CD4-positive, alpha-beta memory T cell (primary cell): ENCODE measurements at regions of chr22 and their contacts with region 1.

Region 1: GRCh38 chr22:37623075-37624016 is 14.7 kb downstream of the GGA1 start:
- DNase-seq: peak; percentile 72 to 79 (median 75)
- H3K4me3 ChIP-seq: no peak overlapping the region
- H3K4me3 Mint-ChIP-seq: peak overlapping the region in 7 of 8 donors; percentile 9 to 85 (median 60)
- H3K27ac ChIP-seq: peak overlapping the region; percentile 52
- H3K27ac Mint-ChIP-seq: peak overlapping the region; percentile 92 to 97 (median 94)
- H3K4me1 ChIP-seq: peaks cover 52% of the 10 kb centered on the region
- H3K4me1 Mint-ChIP-seq: peaks cover 19 to 53% (median 37%) of the 10 kb centered on the region in 4 donors
- H3K27me3 ChIP-seq: no peaks in the 10 kb centered on the region
- H3K27me3 Mint-ChIP-seq: no peaks in the 10 kb centered on the region

Region 2: GRCh38 chr22:37658133-37659065 is 35.1 kb after region 1 on chr22 and contains the start of gene PDXP:
- CTCF ChIA-PET with region 1: interaction called, 10 read pairs
- POLR2A ChIA-PET with region 1: interaction called, 36 read pairs
- intact Hi-C with region 1: no loop called
- DNase-seq: peak; percentile 98
- H3K4me3 ChIP-seq: peak within 1 kb of the TSS; percentile 27 to 57
- H3K4me3 Mint-ChIP-seq: peak within 1 kb of the TSS; percentile 82 to 94 (median 86)
- H3K27ac ChIP-seq: peak within 1 kb of the TSS; percentile 63
- H3K27ac Mint-ChIP-seq: peak within 1 kb of the TSS; percentile 85 to 98 (median 93)
- H3K4me1 ChIP-seq: peaks cover 33% of the 10 kb centered on the region
- H3K4me1 Mint-ChIP-seq: peaks cover 29 to 49% (median 37%) of the 10 kb centered on the region in 4 donors
- H3K27me3 ChIP-seq: no peaks in the 10 kb centered on the region
- H3K27me3 Mint-ChIP-seq: no peaks in the 10 kb centered on the region
- total RNA-seq, gene PDXP: 7.3 to 9.8 TPM

Region 3: DNA sequence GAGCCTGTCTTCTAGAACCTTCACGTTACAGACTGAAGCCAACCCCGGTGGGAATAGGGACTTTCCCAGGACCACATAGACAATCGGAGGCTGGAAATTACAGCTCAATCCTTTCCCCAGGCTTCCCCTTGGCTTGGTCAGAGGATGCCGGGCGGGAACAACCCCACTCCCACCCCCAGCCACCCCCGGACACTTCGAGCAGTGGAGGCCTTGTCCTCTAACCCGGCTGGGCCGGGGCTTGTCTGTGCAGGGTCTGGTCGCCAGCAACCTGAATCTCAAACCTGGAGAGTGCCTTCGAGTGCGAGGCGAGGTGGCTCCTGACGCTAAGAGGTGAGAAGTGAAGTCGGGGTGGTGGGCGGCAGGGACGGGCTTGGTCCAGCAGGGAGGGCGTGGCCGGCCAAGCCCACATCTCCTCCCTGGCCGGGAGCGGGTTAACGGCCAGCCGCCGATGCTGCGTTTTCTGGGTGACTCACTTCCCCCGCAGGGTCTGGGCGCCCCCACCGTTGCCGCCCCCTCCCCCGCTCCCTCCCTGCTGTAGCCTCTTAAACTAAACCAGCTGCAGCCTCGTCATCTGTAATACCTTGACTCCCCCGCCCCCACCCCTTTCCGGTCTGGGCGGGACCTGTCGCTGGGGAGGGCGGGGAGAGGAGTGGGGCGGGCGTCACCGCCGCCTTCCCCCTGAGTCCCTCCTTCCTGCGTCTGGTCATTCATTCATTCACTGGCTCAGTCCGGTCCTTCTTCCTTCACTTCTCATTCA is 53.6 kb after region 1 on chr22:
- CTCF ChIA-PET with region 1: interaction called, 78 read pairs
- POLR2A ChIA-PET with region 1: interaction called, 57 read pairs
- intact Hi-C with region 1: loop called (anchors 1 kb)
- DNase-seq: peak; percentile 92 to 97 (median 93)
- H3K4me3 ChIP-seq: peak overlapping the region; percentile 62 to 95
- H3K4me3 Mint-ChIP-seq: peak overlapping the region; percentile 88 to 99 (median 94)
- H3K27ac ChIP-seq: peak overlapping the region; percentile 87
- H3K27ac Mint-ChIP-seq: peak overlapping the region; percentile 96 to 100 (median 100)
- H3K4me1 ChIP-seq: peaks cover 48% of the 10 kb centered on the region
- H3K4me1 Mint-ChIP-seq: peaks cover 29 to 80% (median 46%) of the 10 kb centered on the region in 4 donors
- H3K27me3 ChIP-seq: no peaks in the 10 kb centered on the region
- H3K27me3 Mint-ChIP-seq: no peaks in the 10 kb centered on the region

Region 4: GRCh38 chr22:37686002-37686982 is 62.9 kb after region 1 on chr22 and contains the start of gene NOL12:
- CTCF ChIA-PET with region 1: interaction called, 78 read pairs
- POLR2A ChIA-PET with region 1: interaction called, 39 read pairs
- intact Hi-C with region 1: loop called (anchors 1 kb)
- DNase-seq: peak; percentile 76 to 82 (median 77)
- H3K4me3 ChIP-seq: peak within 1 kb of the TSS; percentile 79 to 96
- H3K4me3 Mint-ChIP-seq: peak within 1 kb of the TSS; percentile 91 to 98 (median 96)
- H3K27ac ChIP-seq: peak within 1 kb of the TSS; percentile 92
- H3K27ac Mint-ChIP-seq: peak within 1 kb of the TSS; percentile 91 to 98 (median 95)
- H3K4me1 ChIP-seq: peaks cover 25% of the 10 kb centered on the region
- H3K4me1 Mint-ChIP-seq: peaks cover 16 to 34% (median 25%) of the 10 kb centered on the region in 4 donors
- H3K27me3 ChIP-seq: no peaks in the 10 kb centered on the region
- H3K27me3 Mint-ChIP-seq: no peaks in the 10 kb centered on the region
- total RNA-seq, gene NOL12: 50.3 to 52.0 TPM